Calu3 (cell line): ENCODE measurements at regions of chr7 and their contacts with region 1.

Region 1: GRCh38 chr7:91034459-91035368 is 229.5 kb upstream of the FZD1 start:
- DNase-seq: peak; percentile 37
- H3K4me3 Mint-ChIP-seq: no peak overlapping the region
- H3K27ac Mint-ChIP-seq: no peak overlapping the region
- H3K4me1 Mint-ChIP-seq: no peaks in the 10 kb centered on the region
- H3K27me3 Mint-ChIP-seq: no peaks in the 10 kb centered on the region
- CTCF ChIP-seq: no peak

Region 2: GRCh38 chr7:90455163-90456030 is 579.3 kb before region 1 on chr7:
- CTCF ChIA-PET with region 1: interaction called, 11 read pairs
- intact Hi-C with region 1: loop called (anchors 1 kb)
- DNase-seq: peak; percentile 8
- H3K4me3 Mint-ChIP-seq: peak overlapping the region; percentile 58
- H3K27ac Mint-ChIP-seq: no peak overlapping the region
- H3K4me1 Mint-ChIP-seq: peaks cover 10% of the 10 kb centered on the region
- H3K27me3 Mint-ChIP-seq: no peaks in the 10 kb centered on the region
- CTCF ChIP-seq: peak; percentile 44

Region 3: DNA sequence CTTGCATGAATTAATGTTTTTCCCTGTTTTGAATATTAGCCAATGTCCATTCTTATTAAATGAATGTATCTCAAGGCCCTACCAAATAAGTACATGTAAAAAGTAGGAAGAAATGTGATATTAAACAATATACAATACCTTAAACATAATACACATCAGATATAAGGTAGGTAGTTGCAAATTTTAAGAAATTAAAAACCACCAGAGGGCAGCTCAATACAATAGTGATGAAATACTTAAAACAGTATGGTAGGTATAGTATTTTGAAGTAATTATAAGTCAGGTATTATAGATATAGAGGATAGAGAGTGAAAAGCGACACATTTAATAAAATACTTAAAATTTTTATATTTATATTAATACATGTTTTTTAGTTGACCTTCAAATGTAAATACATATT is 482.2 kb before region 1 on chr7:
- CTCF ChIA-PET with region 1: no interaction called
- intact Hi-C with region 1: loop called (anchors 5 kb)
- DNase-seq: no peak
- H3K4me3 Mint-ChIP-seq: no peak overlapping the region
- H3K27ac Mint-ChIP-seq: no peak overlapping the region
- H3K4me1 Mint-ChIP-seq: no peaks in the 10 kb centered on the region
- H3K27me3 Mint-ChIP-seq: no peaks in the 10 kb centered on the region
- CTCF ChIP-seq: no peak

Region 4: DNA sequence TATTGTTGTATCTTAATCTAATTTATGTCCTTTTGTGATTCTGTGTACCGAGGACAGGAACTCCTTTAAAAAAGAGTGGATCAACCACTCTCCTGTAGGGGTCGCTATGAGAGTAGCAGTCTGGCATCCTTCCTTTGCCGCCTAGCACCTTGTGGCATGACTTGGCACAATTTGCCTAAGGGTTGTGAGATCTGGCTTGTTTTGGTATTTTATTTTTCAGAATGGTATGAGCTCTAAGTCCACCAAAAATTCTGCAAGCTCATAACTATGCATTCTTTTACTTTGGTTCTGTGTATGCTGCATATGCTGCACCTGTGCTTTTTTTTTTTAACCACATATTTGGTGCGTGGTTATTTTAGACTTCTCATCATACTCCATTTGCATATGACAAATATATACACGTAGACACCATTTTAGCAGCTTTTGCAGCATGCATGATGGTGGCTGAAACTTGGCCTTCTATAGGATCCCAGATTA is 325.8 kb before region 1 on chr7:
- CTCF ChIA-PET with region 1: interaction called, 5 read pairs
- intact Hi-C with region 1: loop called (anchors 2 kb)
- DNase-seq: peak; percentile 32
- H3K4me3 Mint-ChIP-seq: no peak overlapping the region
- H3K27ac Mint-ChIP-seq: no peak overlapping the region
- H3K4me1 Mint-ChIP-seq: peaks cover 42% of the 10 kb centered on the region
- H3K27me3 Mint-ChIP-seq: no peaks in the 10 kb centered on the region
- CTCF ChIP-seq: no peak

Region 5: GRCh38 chr7:91212587-91212986 is 177.9 kb after region 1 on chr7:
- CTCF ChIA-PET with region 1: no interaction called
- intact Hi-C with region 1: no loop called
- DNase-seq: no peak
- H3K4me3 Mint-ChIP-seq: no peak overlapping the region
- H3K27ac Mint-ChIP-seq: no peak overlapping the region
- H3K4me1 Mint-ChIP-seq: no peaks in the 10 kb centered on the region
- H3K27me3 Mint-ChIP-seq: no peaks in the 10 kb centered on the region
- CTCF ChIP-seq: no peak

Region 6: DNA sequence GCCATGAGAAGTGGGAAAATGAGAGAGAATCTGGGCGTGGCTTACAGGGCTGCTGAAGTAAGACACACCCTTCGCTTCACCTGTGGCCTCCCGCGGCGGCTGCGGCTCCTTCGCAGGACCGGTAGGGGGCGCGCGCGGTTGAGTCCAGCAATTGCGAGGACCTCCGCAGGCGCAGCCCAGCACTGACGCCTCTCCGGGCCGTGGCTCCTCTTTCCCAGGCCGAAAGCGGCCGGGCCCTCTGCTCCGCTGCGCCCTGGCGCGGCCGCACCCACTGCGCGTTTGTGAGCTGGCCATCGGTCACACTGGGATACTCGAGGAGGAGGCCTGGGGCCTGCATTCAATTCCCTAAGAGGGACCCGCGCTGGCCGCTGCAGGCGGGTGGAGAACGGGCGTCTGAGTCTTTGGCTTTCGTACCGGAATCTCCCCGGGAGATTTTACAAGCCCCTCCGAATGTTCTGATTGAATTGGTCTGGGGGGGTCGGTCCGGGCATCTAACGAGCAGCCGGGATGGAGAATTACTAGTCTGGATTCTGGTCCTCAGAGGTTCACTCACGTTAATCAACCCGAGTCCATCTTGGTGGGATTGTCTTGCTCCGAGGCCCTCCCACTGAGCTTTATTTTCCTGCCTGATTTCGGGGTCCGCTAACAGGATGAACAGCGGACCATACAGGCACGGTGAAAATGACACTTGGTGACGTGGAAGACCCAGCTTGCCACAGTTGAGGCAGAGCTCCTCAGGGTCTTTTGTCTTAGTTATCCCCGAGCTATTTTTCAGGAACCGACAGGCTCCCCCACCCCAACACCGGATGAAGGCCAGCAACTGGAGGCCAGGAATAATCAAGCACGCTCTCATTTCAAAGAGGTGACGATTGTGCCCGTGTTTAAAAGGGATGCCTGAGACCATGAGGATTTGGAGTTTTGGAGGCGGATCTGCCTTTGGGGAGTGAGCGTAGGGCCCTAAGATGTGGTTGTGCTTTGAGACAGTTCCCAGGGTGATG is 1144.5 kb after region 1 on chr7 and contains the start of gene LRRD1:
- CTCF ChIA-PET with region 1: interaction called, 11 read pairs
- intact Hi-C with region 1: no loop called
- DNase-seq: peak; percentile 92
- H3K4me3 Mint-ChIP-seq: peak within 1 kb of the TSS; percentile 73
- H3K27ac Mint-ChIP-seq: no peak within 1 kb of the TSS
- H3K4me1 Mint-ChIP-seq: no peaks in the 10 kb centered on the region
- H3K27me3 Mint-ChIP-seq: no peaks in the 10 kb centered on the region
- CTCF ChIP-seq: peak; percentile 89
- total RNA-seq, gene LRRD1: not detected in 2 replicates